ENCODE measurements at regions of chr12 and their contacts with region 1.

Region 1: GRCh38 chr12:21934173-21934572 is 7.1 kb downstream of the ABCC9 start:
- DNase-seq: no peak
- ATAC-seq: no peak
- H3K4me3 ChIP-seq: no peak overlapping the region
- H3K27ac ChIP-seq: no peak overlapping the region
- H3K4me1 ChIP-seq: no peaks in the 10 kb centered on the region
- H3K27me3 ChIP-seq: no peaks in the 10 kb centered on the region
- CTCF ChIP-seq: no peak
- EP300 ChIP-seq: no peak
- POLR2A ChIP-seq: no peak
- RAD21 ChIP-seq: no peak

Region 2: DNA sequence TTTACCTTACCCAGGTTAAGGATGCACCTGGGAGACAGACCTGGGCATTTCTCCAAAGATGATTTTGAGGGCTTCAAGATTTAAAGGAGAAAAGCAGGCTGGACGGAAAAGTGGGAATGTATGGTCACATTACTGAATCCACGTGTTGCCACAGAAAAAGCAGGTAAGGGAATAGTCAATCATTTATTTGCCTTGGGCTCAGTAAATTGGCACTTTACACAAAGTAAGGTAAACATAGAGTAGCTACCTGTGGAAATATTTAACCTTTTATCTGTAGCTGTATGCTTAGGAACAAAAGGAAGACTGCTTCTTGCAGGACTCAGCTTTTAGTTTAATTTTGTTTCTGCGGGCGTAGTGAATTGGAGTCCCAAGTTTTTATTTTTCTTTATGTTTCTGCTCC is 970.4 kb before region 1 on chr12:
- CTCF ChIA-PET with region 1: no interaction called
- POLR2A ChIA-PET with region 1: no interaction called
- in situ Hi-C with region 1: no loop called
- intact Hi-C with region 1: no loop called
- DNase-seq: no peak
- ATAC-seq: no peak
- H3K4me3 ChIP-seq: no peak overlapping the region
- H3K27ac ChIP-seq: no peak overlapping the region
- H3K4me1 ChIP-seq: no peaks in the 10 kb centered on the region
- H3K27me3 ChIP-seq: no peaks in the 10 kb centered on the region
- CTCF ChIP-seq: no peak
- EP300 ChIP-seq: no peak
- POLR2A ChIP-seq: no peak
- RAD21 ChIP-seq: no peak

Region 3: GRCh38 chr12:21971344-21971743 is 37.2 kb after region 1 on chr12:
- CTCF ChIA-PET with region 1: no interaction called
- POLR2A ChIA-PET with region 1: no interaction called
- in situ Hi-C with region 1: no loop called
- intact Hi-C with region 1: loop called (anchors 1 kb)
- DNase-seq: no peak
- ATAC-seq: no peak
- H3K4me3 ChIP-seq: no peak overlapping the region
- H3K27ac ChIP-seq: no peak overlapping the region
- H3K4me1 ChIP-seq: no peaks in the 10 kb centered on the region
- H3K27me3 ChIP-seq: no peaks in the 10 kb centered on the region
- CTCF ChIP-seq: no peak
- EP300 ChIP-seq: no peak
- POLR2A ChIP-seq: no peak
- RAD21 ChIP-seq: no peak

Region 4: GRCh38 chr12:22321638-22322037 is 387.5 kb after region 1 on chr12:
- CTCF ChIA-PET with region 1: no interaction called
- POLR2A ChIA-PET with region 1: no interaction called
- in situ Hi-C with region 1: no loop called
- intact Hi-C with region 1: no loop called
- DNase-seq: no peak
- ATAC-seq: no peak
- H3K4me3 ChIP-seq: no peak overlapping the region
- H3K27ac ChIP-seq: no peak overlapping the region
- H3K4me1 ChIP-seq: no peaks in the 10 kb centered on the region
- H3K27me3 ChIP-seq: 0 out of 5 replicates have a peak, but pooled peaks cover 0 to 5% of the 10 kb centered on the region in 2 experiments
- CTCF ChIP-seq: no peak
- EP300 ChIP-seq: no peak
- POLR2A ChIP-seq: no peak
- RAD21 ChIP-seq: no peak